Endothelial cell of umbilical vein (primary cell): ENCODE measurements at regions of chr18 and their contacts with region 1.

Region 1: DNA sequence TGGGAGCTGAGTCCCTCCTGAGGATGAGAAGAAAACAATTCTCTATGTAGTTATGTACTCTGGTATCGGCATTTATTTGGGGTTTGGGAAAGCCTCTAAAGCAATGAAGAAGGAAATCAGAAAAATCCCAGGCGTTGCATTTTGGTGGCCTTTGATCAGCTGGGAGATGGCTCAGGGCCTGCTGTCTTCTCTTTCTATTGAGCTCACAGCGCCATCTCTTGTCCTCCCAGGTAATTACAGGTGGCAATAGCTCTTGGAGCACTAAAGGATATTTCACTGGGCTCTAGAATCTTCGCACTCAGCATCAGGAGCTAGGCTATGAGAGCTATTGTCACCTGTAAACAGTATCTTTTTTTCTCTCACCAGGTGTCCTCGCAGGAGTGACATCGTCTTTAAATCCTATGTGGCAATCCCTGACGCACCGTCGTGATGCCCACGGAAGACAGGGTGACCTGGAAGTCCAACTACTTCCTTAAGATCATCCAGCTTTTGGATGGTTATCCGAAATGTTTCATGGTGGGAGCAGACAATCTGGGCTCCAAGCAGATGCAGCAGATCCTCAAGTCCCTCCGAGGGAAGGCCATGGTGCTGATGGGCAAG is 76.1 kb upstream of the PMAIP1 start:
- DNase-seq: peak; percentile 51
- H3K4me3 ChIP-seq: no peak overlapping the region
- H3K27ac ChIP-seq: no peak overlapping the region
- H3K4me1 ChIP-seq: no peaks in the 10 kb centered on the region
- H3K27me3 ChIP-seq: no peaks in the 10 kb centered on the region
- CTCF ChIP-seq: peak; percentile 52 to 69
- POLR2A ChIP-seq: no peak

Region 2: DNA sequence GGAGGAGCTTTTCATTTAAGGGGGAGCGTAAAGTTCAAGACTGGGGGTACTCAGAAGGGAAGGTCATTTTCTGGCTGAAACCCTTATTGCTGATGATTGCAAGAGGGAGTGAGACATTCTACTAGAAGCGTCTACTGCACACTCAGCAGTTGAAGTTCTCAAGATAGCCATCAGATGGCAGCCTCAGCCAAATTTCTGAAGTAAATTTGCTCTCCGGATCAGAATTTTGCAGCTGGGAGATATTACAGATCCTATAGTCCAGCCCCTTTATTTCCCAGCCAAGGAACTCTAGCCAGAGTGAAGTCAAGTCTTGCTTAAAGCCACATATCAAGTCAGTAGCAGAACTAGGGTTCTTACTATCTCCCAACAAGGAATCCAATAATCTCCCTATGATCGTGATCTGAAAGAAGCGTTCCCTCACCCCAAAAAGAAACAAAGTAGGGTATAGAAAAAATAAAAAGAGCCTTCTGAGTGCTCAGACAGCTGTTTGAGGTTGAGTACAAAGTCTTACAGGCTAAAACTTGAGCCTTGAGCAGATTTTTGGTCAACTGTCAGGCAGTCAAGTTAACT is 574.4 kb before region 1 on chr18:
- CTCF ChIA-PET with region 1: interaction called, 19 read pairs
- POLR2A ChIA-PET with region 1: no interaction called
- dilution Hi-C with region 1: no loop called
- intact Hi-C with region 1: no loop called
- DNase-seq: peak; percentile 69
- H3K4me3 ChIP-seq: no peak overlapping the region
- H3K27ac ChIP-seq: no peak overlapping the region
- H3K4me1 ChIP-seq: no peaks in the 10 kb centered on the region
- H3K27me3 ChIP-seq: peaks cover 5 to 16% of the 10 kb centered on the region in 2 experiments
- CTCF ChIP-seq: peak; percentile 51 to 70
- POLR2A ChIP-seq: no peak

Region 3: DNA sequence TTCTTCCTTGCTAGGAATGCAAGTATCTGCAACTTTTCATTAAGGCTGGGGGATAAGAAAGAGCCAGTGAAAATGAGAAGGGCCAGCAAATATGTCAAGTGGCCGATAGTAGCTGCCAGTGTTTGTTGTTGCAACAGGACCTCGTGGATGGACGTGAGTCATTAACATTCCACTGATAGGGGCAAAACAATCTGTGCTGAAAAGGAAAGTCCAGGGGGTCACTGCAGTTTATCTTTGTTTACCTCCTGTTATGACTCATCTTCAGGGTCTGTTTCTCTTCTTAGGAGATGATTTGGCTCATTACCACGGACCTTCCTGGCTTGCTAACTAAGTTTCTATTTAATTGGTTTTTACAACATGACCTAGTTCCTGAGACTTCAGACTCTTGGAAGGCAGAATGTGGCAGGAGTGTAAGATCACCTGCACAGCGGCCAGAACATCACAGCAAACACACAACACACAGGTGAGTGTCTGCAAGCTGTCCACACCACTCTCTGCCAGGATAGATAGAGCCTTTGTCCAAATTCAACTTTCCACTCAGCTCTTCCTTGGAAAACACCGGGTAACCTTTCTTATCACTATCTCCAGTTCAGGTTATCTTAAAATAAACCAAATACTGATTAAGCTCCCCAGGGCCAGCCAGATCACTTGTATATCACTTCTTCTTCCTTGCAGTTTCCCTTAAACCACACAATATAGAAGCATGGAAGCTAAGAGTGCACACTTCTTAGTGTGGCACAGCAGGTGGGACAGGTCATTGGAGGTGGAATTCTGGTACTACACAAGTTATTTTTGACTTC is 307.1 kb before region 1 on chr18:
- CTCF ChIA-PET with region 1: interaction called, 21 read pairs
- POLR2A ChIA-PET with region 1: no interaction called
- dilution Hi-C with region 1: no loop called
- intact Hi-C with region 1: no loop called
- DNase-seq: peak; percentile 91
- H3K4me3 ChIP-seq: no peak overlapping the region
- H3K27ac ChIP-seq: no peak overlapping the region
- H3K4me1 ChIP-seq: peaks cover 4% of the 10 kb centered on the region
- H3K27me3 ChIP-seq: no peaks in the 10 kb centered on the region
- CTCF ChIP-seq: no peak
- POLR2A ChIP-seq: no peak

Region 4: GRCh38 chr18:59646228-59646962 is 177.3 kb before region 1 on chr18:
- CTCF ChIA-PET with region 1: interaction called, 13 read pairs
- POLR2A ChIA-PET with region 1: no interaction called
- dilution Hi-C with region 1: no loop called
- intact Hi-C with region 1: no loop called
- DNase-seq: no peak
- H3K4me3 ChIP-seq: no peak overlapping the region
- H3K27ac ChIP-seq: no peak overlapping the region
- H3K4me1 ChIP-seq: no peaks in the 10 kb centered on the region
- H3K27me3 ChIP-seq: no peaks in the 10 kb centered on the region
- CTCF ChIP-seq: no peak
- POLR2A ChIP-seq: no peak

Region 5: GRCh38 chr18:59715966-59716369 is 107.7 kb before region 1 on chr18:
- CTCF ChIA-PET with region 1: interaction called, 25 read pairs
- POLR2A ChIA-PET with region 1: no interaction called
- dilution Hi-C with region 1: no loop called
- intact Hi-C with region 1: no loop called
- DNase-seq: peak; percentile 77
- H3K4me3 ChIP-seq: no peak overlapping the region
- H3K27ac ChIP-seq: no peak overlapping the region
- H3K4me1 ChIP-seq: no peaks in the 10 kb centered on the region
- H3K27me3 ChIP-seq: no peaks in the 10 kb centered on the region
- CTCF ChIP-seq: no peak
- POLR2A ChIP-seq: no peak

Region 6: DNA sequence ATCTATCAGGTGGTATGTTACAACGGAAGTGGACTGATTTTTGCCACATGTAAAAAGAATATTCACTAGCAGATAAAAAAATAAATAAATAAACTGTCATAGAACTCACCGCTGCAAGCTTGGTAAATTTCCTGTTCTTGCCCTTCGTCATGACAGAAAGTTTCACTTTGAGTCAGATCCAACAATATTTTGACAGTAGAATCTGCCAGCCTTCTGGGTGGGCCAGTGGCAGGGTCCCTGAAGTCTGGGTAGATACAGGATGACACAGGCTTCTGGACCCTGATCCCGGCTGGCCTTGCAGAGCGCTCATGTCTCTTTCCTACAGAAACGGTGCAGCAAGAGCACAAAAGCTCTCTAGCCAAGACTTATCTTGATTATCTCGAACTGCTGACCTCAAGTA is 21.7 kb before region 1 on chr18:
- CTCF ChIA-PET with region 1: interaction called, 12 read pairs
- POLR2A ChIA-PET with region 1: no interaction called
- dilution Hi-C with region 1: no loop called
- intact Hi-C with region 1: no loop called
- DNase-seq: no peak
- H3K4me3 ChIP-seq: no peak overlapping the region
- H3K27ac ChIP-seq: no peak overlapping the region
- H3K4me1 ChIP-seq: no peaks in the 10 kb centered on the region
- H3K27me3 ChIP-seq: no peaks in the 10 kb centered on the region
- CTCF ChIP-seq: no peak
- POLR2A ChIP-seq: no peak

Region 7: DNA sequence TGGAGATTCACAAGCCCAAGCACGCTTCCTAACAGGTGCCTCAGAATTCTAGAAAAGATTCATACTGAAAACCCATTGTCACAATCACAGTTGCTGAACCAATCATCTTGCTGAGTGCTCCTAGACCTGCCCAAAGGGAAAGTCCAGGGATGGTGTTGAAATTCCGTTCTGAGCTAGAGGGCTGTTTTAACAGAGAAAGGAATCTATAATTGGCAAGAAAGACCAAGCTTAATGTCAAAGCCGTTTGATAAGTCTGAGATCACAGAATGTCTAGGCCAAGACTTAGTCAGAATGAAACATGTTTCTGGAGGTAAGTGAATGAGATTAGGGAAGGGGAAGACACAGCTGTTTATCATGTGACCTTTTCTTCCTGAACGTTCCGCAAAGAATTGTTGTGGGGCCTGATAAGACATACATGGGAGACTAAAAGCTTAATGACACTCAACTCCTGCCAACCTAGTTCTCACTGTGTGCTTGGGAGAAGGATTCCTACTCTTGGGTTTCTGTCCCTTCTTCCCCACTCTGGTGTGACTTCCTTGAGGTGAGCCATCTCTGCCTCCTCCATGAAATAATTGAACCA is 103.6 kb after region 1 on chr18:
- CTCF ChIA-PET with region 1: no interaction called
- POLR2A ChIA-PET with region 1: no interaction called
- dilution Hi-C with region 1: no loop called
- intact Hi-C with region 1: no loop called
- DNase-seq: peak; percentile 49
- H3K4me3 ChIP-seq: no peak overlapping the region
- H3K27ac ChIP-seq: no peak overlapping the region
- H3K4me1 ChIP-seq: peaks cover 2% of the 10 kb centered on the region
- H3K27me3 ChIP-seq: peaks cover 2 to 9% of the 10 kb centered on the region in 2 experiments
- CTCF ChIP-seq: no peak
- POLR2A ChIP-seq: no peak

Region 8: GRCh38 chr18:60549338-60549960 is 725.8 kb after region 1 on chr18:
- CTCF ChIA-PET with region 1: interaction called, 16 read pairs
- POLR2A ChIA-PET with region 1: no interaction called
- dilution Hi-C with region 1: no loop called
- intact Hi-C with region 1: no loop called
- DNase-seq: peak; percentile 64
- H3K4me3 ChIP-seq: no peak overlapping the region
- H3K27ac ChIP-seq: no peak overlapping the region
- H3K4me1 ChIP-seq: no peaks in the 10 kb centered on the region
- H3K27me3 ChIP-seq: no peaks in the 10 kb centered on the region
- CTCF ChIP-seq: peak; percentile 53 to 57
- POLR2A ChIP-seq: no peak